ENCODE measurements at regions of chr22 and their contacts with region 1.

Region 1: DNA sequence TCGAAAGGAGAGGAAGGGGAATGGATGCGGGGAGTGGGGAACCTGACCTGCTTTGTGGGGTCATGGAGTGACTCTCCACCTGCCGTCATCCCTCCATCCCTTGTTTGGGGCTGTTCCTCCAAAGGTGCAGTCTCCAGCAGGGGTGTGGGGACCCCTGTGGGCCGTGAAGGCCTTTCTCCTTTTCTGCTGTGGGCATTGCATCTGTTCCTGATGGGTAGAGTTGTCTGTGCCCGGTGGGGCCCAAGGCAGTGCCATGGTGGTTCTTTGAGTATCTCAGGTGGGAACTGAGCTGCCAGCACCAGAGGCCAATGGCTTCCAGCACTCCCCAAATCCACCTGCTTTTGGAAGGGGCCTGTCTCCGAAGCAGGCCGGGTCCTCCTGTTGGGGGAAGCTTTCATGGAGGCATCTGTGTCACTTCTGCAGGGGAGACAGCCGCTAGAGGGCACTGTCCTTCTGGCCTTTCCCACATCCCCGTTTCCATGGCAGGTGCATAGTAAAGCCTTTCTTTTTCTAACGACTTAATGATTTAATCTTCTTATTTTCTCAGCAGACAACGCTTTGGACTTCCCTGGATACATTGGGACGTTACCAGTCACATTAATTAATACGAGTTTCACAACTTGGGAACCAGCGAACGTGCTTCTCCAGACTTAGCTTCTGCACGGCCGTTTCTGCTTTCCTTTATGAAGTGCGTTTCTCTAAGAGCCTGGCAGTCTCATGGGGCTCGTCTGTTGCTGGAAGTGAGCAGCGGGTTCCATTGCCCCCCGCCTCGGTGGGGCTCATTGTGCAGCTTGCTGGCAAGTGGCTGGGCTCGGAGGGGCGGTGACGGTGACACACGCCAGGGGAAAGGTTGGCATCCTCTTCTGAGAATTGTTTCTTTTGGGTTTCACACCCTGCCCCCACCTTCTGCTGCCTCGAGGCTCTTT is 57.1 kb downstream of the PARVB start:
- DNase-seq: no peak
- H3K4me3 ChIP-seq: no peak overlapping the region
- H3K27me3 ChIP-seq: no peaks in the 10 kb centered on the region
- CTCF ChIP-seq: peak; percentile 92

Region 2: DNA sequence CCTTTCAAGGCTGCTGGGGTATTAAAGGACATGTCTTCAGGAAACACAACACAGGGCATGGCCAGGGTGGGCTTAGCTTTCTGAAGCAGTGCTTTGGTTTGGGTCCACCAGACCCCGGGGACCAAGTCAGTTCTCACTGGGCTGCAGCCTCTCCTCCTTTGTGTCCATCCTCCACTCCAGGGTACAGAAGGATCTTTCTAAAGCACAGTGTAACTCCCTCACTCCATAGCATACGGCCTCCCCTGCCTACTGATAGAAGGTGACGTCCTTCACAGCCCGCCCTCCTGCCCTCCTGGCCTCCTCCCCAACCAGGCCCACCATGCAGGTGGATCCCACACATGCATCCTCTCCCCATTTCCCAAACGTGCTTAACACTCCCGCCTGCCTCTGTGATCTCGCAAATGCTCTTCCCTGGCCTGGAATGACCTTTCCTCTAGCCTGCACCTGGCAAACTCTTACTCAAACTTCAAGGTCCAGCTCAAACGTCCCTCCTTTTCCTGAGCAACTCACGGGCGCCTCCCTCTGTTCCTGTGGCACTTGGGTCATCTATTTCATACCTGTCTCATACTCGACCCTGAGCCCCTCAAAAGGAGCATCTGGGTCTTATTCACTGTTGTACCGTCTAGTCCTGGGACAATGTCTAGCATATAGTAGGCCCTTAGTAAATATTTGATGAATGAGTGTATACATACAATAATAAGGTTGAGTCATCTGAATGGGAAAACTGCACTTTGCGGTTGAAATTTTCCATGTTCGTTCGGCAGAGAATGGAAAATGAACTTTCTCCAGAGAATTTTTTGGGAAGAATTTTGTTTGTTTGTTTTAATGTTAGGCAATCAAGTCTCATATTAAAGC is 456.8 kb before region 1 on chr22:
- CTCF ChIA-PET with region 1: no interaction called
- POLR2A ChIA-PET with region 1: no interaction called
- DNase-seq: no peak
- H3K4me3 ChIP-seq: no peak overlapping the region
- H3K27me3 ChIP-seq: no peaks in the 10 kb centered on the region
- CTCF ChIP-seq: no peak

Region 3: GRCh38 chr22:44068422-44069191 is 12.6 kb before region 1 on chr22:
- CTCF ChIA-PET with region 1: interaction called, 47 read pairs
- POLR2A ChIA-PET with region 1: no interaction called
- DNase-seq: no peak
- H3K4me3 ChIP-seq: no peak overlapping the region
- H3K27me3 ChIP-seq: no peaks in the 10 kb centered on the region
- CTCF ChIP-seq: no peak

Region 4: DNA sequence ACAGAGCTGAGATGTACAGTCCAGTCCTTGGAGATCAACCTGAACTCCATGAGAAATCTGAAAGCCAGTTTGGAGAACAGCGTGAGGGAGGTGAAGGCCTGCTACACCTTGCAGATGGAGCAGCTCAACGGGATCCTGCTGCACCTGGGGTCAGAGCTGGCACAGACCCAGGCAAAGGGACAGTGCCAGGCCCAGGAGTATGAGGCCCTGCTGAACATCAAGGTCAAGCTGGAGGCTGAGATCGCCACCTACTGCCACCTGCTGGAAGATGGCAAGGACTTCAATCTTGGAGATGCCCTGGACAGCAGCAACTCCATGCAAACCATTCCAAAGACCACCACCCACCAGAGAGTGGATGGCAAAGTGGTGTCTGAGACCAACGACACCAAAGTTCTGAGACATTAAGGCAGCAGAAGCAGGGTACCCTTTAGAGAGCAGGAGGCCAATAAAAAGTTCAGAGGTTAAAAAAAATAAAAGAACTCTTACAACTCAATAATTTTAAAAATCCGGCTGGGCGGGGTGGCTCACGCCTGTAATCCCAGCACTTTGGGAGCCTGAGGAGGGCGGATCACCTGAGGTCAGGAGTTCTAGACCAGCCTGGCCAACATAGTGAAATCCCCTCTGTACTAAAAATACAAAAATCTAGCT is 486.8 kb after region 1 on chr22:
- CTCF ChIA-PET with region 1: interaction called, 29 read pairs
- POLR2A ChIA-PET with region 1: no interaction called
- DNase-seq: no peak
- H3K4me3 ChIP-seq: no peak overlapping the region
- H3K27me3 ChIP-seq: no peaks in the 10 kb centered on the region; the same call in 1 of the 2 replicates
- CTCF ChIP-seq: peak; percentile 69

Region 5: DNA sequence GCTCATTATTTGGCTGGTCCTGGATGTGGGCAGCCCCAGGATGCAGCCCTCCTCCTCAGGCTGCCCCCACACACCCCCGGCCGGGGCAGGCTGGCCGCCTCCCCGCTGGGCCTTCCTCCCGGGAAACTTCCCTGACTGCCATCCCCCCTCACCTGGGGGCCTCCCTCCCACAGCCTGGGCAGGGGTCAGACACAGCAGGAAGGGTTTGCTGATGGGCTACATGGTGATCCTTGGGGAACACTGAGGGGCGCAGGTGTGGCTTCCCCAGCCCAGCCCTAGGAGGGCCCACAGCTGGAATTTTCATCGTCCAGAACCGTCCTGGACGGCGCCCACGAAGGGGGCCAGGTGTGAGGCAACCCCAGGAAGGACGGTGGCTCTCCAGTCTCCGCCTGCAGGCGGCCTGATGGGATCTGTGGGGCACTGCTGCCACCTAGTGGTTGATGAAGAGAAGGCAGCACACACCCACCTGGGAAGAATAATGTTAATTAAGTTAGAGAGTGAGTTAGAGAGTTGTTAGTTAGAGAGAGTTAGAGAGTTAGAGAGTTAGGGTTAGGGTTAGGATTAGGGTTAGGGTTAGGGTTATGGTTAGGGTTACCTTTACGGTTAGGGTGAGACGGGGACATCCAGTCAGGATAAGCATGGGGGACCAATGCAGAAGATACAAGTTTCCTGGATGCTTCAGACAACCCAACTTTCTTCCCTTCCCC is 544.9 kb after region 1 on chr22:
- CTCF ChIA-PET with region 1: interaction called, 20 read pairs
- POLR2A ChIA-PET with region 1: no interaction called
- DNase-seq: no peak
- H3K4me3 ChIP-seq: no peak overlapping the region
- H3K27me3 ChIP-seq: 0 out of 2 replicates have a peak, but pooled peaks cover 1% of the 10 kb centered on the region
- CTCF ChIP-seq: peak; percentile 86